ENCODE measurements at regions of chr3 and their contacts with region 1.

Region 1: DNA sequence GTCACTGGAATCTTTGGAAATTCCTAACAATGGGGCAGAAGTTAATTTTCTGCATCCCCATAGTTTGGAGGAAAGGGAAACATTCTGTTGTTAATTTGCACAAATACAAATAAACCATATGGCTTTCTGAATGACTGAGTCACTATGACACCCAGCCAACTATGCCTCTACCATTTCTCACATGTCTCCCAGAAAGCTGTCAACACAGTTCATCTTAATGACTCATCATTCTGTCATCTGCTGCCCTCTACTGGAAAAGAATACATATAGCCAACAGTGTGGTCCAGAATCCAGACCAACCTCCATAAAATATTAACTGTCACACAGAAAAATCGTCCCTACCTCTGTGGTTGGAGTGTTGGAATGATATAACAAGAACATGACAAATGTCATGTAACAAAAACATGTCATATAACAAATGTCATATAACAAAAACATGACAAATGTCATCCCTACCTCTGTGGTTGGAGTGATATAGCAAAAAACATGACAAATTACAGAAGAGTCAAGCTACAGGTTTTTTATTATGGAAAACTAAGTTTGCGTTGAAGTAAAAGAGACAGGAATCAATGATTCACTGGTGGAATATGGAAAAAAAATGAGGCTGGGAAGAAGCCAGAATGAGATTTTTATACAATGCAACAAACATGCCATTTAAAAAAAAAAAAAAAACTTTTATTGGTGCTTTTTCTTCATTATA is 47.7 kb upstream of the GYG1 start:
- DNase-seq: peak; percentile 28
- H3K4me3 Mint-ChIP-seq: no peak overlapping the region
- H3K27ac Mint-ChIP-seq: no peak overlapping the region
- H3K4me1 Mint-ChIP-seq: no peaks in the 10 kb centered on the region
- H3K27me3 Mint-ChIP-seq: no peaks in the 10 kb centered on the region

Region 2: GRCh38 chr3:147361454-147362420 is 1581.9 kb before region 1 on chr3:
- CTCF ChIA-PET with region 1: no interaction called
- intact Hi-C with region 1: loop called (anchors 10 kb)
- DNase-seq: peak; percentile 65
- H3K4me3 Mint-ChIP-seq: no peak overlapping the region
- H3K27ac Mint-ChIP-seq: no peak overlapping the region
- H3K4me1 Mint-ChIP-seq: peaks cover 5% of the 10 kb centered on the region
- H3K27me3 Mint-ChIP-seq: peaks cover 65% of the 10 kb centered on the region

Region 3: DNA sequence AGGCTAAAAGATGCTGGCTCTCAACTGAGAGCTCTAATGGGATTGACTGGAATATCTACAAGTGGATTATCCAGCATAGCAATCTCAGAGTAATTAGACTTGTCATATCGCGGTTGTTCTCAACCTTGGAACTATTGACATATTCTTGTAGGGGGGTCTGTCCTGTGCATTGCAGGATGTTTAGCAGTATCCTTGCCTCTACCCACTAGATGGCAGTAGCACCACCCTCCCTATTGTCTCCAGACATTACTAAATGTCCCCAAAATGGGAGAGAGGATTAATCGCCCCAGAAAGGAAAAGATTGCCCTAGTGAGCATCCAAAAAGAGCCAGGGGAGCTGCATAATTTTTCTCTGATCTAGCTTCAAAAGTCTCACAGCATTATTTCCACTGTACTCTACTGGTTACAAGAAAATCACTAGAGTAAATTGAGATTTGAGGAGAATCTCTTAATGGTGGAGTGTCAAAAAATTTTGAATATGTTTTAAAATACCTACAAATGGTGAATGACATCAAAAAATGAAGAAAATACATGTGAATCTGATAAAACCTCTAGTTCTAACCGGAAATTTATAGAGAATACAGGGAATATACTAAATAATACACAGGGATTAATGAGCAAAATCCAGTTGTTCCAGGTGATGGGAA is 634.1 kb before region 1 on chr3:
- CTCF ChIA-PET with region 1: no interaction called
- intact Hi-C with region 1: loop called (anchors 1 kb)
- DNase-seq: peak; percentile 13
- H3K4me3 Mint-ChIP-seq: no peak overlapping the region
- H3K27ac Mint-ChIP-seq: no peak overlapping the region
- H3K4me1 Mint-ChIP-seq: no peaks in the 10 kb centered on the region
- H3K27me3 Mint-ChIP-seq: no peaks in the 10 kb centered on the region

Region 4: DNA sequence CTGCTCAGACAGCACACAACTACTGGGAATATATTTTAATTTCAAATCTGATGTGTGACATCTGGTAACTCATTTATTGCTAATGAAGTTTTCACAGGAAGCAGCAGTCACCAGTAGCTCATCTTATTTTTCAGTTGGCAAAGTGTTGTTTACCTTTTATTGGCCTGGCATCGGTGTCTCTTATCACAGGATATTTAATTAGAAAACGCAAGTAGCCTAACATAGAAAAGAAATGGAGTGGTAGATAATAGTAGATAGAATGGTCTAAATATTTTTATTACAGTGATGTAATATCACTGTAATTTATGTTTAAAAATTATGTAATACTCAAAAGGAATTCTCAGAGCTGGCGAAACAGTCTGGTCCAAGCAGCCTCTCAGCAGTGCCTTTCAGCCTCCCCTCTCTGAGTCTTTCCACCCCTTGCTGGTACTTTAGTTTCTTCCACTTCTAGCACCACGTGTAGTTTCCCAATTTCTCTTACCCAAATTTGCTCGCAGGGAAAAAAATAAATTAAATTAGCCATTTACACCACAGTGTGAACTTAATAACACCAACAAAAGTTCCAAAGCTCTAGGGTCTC is 214.1 kb before region 1 on chr3:
- CTCF ChIA-PET with region 1: no interaction called
- intact Hi-C with region 1: loop called (anchors 5 kb)
- DNase-seq: no peak
- H3K4me3 Mint-ChIP-seq: no peak overlapping the region
- H3K27ac Mint-ChIP-seq: no peak overlapping the region
- H3K4me1 Mint-ChIP-seq: no peaks in the 10 kb centered on the region
- H3K27me3 Mint-ChIP-seq: peaks cover 2% of the 10 kb centered on the region

Region 5: DNA sequence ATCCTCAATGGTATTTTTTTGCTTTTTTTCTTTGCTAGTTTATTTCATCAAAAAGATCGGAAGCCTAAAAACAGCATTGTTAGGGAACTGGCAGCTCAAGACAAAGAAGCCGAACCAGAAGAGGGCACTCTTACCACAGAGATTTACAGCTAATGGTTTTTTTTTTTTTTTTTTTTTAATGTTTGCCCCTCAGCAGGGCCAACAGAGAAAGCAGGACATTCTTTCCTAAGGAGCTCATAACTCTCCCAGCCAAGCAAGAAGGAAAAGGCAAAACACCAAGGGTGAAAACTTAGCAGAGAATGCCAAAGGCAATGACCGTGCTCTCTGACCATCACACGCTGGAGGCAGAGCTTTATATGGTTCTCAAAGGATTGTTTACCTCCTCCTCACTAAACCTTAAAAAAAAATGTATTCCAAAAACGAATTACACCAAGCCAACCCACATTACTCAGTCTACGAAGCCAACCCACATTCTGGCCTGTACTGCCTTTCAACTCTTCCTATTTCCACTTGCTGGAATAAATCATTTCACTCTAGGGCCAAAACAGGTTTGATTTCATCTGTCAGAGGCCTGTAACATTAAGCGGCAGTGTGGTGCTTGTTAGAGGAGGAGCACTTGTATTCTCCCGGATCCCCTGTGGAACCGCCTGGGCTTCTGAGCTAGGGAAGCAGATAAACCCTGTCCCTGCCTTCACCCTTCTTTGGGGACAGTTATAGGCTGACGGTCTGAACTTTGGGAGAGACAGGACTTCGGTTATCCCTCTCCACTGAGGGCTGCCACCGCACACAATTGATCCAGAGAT is 12.1 kb after region 1 on chr3:
- CTCF ChIA-PET with region 1: interaction called, 22 read pairs
- intact Hi-C with region 1: no loop called
- DNase-seq: peak; percentile 32
- H3K4me3 Mint-ChIP-seq: no peak overlapping the region
- H3K27ac Mint-ChIP-seq: no peak overlapping the region
- H3K4me1 Mint-ChIP-seq: peaks cover 7% of the 10 kb centered on the region
- H3K27me3 Mint-ChIP-seq: no peaks in the 10 kb centered on the region